ENCODE measurements at regions of chr20 and their contacts with region 1.

Region 1: DNA sequence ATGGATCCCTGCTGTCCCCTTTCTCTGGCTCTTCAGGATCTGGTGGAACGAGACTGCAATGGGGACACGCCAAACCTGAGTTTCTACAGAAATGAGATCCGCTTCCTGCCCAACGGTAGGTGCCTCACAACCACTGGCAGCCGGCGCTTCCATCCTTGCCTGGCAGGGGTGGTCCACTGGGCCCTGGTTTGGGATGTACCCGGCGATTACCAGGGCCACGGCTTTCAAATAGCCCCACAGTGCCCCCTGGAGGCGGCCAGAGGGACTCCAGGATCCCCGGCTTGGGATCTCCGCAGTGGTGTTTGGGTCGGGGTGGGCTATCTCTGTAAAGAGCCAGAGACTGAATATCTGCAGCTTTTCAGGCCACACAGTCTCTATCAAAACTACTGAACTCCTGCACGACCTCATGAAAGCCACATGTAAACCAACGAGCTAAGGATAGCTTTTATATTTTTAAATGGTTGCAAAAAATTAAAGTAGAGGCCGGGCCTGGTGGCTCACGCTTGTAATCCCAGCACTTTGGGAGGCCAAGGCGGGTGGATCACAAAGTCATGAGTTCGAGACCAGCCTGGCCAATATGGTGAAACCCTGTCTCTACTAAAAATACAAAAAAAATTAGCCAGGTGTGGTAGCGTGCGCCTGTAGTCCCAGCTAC is 3.7 kb downstream of the OGFR start:
- DNase-seq: peak; percentile 82
- CTCF ChIP-seq: peak; percentile 83

Region 2: GRCh38 chr20:62536871-62537401 is 271.4 kb before region 1 on chr20:
- CTCF ChIA-PET with region 1: no interaction called
- POLR2A ChIA-PET with region 1: interaction called, 10 read pairs
- DNase-seq: no peak
- CTCF ChIP-seq: no peak

Region 3: GRCh38 chr20:62550087-62550632 is 258.2 kb before region 1 on chr20:
- CTCF ChIA-PET with region 1: no interaction called
- POLR2A ChIA-PET with region 1: no interaction called
- DNase-seq: no peak
- CTCF ChIP-seq: no peak

Region 4: GRCh38 chr20:62652051-62652926 is 156.0 kb before region 1 on chr20:
- CTCF ChIA-PET with region 1: interaction called, 10 read pairs
- POLR2A ChIA-PET with region 1: no interaction called
- DNase-seq: peak; percentile 92
- CTCF ChIP-seq: no peak

Region 5: DNA sequence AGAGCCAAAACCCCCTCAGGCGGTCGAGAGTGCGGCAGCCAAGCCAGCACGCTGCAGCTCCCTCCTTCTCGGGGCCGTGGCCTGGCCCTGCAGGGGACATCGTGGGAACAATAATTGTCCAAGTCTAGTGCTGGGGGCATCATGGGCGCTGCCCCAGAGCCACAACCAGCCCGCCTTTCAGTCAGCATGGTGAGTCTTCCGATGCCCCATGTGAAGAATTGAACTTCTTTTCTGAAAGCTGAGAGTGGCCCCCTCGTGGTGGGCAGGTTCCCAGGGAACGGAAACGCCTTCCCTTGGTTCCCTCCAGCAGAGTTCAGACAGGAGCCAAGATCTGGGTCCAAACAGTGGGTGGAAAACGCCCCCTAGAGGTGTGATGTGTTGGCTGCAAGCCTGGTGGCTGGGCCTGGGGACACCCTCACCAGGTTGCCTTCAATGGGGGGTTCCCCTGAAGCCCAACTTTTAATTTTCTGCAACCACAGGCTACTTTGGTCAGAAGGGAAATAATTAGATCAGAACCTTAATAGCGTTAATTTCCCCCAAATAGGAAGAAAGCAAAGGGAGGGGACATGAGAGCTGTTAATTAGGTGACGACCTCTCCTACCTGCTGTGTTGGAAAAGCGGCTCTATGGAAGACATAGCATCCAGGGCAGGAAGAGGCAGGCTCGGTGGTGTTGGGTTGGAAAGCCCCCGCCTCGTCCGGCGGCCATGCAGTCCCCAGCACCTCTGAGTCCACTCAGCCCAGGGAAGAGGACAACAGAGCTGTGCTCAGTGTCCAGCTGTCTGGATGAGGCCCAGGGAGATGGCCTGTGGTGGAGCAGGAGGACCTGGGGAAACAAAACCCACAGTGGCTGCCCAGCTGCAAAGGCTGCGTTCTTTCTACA is 16.8 kb before region 1 on chr20:
- CTCF ChIA-PET with region 1: interaction called, 24 read pairs
- POLR2A ChIA-PET with region 1: interaction called, 4 read pairs
- DNase-seq: peak; percentile 81
- CTCF ChIP-seq: peak; percentile 94

Region 6: DNA sequence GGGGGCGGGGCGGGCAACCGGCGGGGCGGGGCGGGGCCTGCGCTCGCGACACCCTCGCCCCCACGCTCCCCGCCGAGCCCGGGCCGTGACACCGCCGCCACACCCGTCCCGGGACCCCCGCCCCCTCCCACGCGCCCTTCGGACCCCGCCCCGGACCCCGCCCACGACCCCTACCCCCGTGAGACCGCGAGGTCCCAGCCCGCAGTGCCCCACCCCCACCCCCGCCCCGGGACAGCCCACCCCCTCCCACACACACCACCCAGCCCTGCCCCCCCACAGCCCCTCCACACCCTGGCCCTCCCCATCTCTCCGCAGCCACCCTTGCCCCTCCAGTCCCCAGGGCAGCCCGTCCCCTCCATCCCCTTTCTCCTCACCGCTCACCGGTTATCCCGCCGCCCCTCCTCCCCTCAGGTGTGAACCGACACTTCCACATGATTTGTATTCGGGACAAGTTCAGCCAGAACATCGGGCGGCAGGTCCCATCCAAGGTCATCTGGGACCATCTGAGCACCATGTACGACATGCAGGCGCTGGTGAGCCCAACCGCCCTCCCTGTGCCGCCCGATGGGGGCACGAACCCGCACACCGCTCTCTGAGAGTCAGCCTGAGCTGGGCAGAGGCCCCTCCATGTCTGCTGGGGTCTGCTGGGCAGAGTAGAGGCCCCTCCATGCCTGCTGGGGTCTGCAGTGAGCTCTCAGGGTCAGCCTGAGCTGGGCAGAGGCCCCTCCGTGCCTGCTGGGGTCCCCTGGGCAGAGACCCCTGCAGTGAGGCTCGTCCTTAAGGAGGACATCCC is 11.4 kb before region 1 on chr20:
- CTCF ChIA-PET with region 1: interaction called, 24 read pairs
- POLR2A ChIA-PET with region 1: interaction called, 4 read pairs
- DNase-seq: no peak
- CTCF ChIP-seq: no peak

Region 7: GRCh38 chr20:62822788-62823651 is 14.7 kb after region 1 on chr20:
- CTCF ChIA-PET with region 1: interaction called, 16 read pairs
- POLR2A ChIA-PET with region 1: no interaction called
- DNase-seq: peak; percentile 82
- CTCF ChIP-seq: peak; percentile 85

Measured in GM10248 (cell line).